ENCODE measurements at regions of chr6 and their contacts with region 1.

Region 1: DNA sequence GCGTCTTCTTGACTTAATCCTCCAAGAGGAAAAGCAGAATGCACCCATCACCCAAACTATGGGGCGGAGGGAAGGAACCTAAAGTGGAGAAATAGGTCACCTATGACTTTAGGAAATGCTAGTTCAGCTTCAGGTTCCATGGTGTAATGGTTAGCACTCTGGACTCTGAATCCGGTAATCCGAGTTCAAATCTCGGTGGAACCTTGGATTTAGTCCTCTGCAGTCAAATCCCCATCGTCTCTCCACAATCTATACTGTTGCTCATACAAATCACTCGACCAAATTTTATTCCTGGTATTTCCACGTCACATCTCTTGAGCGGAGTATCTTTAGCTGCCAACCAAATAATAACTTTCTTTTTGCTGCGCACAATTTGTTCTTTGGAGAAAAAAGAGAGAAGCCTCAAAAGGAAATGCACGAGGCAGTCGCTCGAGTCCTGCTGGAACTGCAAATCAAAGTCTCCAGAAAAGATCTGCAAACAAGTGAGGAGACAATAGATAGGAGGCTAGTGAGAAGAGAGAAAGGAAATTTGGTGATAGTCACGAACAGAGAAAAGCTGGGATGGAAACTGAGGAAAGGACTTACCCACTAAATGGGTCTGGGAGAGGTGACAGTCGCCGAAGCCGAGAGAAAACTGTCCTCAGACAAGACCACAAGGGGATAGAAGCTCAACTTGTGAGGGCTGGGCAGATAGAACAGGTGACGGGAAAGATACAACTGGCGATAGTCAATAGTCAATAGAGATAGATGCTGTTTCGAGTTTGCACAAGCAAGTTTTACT is 16.6 kb downstream of the POM121L2 start:
- DNase-seq: no peak
- H3K4me3 Mint-ChIP-seq: no peak overlapping the region
- H3K27ac Mint-ChIP-seq: no peak overlapping the region
- H3K4me1 Mint-ChIP-seq: peaks cover 6% of the 10 kb centered on the region
- H3K27me3 Mint-ChIP-seq: peaks cover 67% of the 10 kb centered on the region

Region 2: DNA sequence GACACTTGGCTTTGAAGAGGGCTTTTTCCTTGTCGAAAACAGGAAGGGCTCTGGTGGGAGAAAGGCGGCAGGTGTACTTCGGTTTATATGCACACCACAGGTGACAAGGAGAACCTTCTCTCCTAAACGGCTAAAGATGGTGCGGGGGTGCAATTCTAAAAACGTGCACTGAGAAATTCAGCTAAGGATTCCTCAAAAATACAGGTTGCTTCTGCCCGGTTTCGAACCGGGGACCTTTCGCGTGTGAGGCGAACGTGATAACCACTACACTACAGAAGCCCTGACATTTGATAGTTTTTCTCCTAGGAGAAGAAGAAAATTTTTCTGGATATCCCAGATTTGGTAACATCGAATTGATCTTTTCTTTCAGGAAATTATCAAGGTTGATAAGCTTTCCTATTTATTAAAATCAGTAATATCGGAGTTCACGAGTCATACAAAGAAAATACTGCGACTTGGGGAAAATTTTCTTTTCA is 15.4 kb before region 1 on chr6:
- intact Hi-C with region 1: loop called (anchors 2 kb)
- DNase-seq: no peak
- H3K4me3 Mint-ChIP-seq: peak overlapping the region; percentile 68
- H3K27ac Mint-ChIP-seq: no peak overlapping the region
- H3K4me1 Mint-ChIP-seq: peaks cover 18% of the 10 kb centered on the region
- H3K27me3 Mint-ChIP-seq: peaks cover 71% of the 10 kb centered on the region

Region 3: DNA sequence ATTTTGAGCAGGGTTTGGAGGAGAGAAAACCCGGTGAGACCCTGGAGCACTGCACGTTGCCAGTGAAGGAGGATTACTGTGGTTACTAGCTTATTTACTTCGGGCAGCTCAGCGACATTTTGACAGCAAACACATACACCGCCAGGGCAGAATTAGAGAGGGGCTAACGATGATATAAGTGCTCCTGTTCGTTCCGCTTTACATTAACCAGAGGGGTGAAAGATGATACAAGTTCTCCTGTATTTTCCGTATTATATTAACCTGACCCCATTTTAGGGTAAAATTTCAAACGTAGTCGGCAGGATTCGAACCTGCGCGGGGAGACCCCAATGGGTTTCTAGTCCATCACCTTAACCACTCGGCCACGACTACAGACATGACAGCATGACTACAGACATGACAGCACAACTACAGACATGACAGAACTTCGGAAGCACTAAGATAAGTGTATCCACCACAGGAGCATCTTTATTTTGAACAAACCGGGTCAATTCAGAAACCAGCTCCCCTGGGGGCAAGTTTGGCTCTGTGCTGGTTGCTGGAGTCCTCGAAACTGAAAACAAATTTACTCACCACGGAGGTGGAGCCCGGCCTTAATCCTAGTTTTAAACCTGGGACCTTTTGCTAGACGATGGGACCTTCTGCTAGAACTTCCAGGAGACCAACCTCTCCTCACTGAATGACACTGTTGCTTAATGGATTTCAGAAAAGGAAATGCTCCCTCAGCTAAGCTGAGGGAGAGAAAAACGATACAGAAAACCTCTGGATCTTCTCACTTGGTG is 257.8 kb after region 1 on chr6:
- intact Hi-C with region 1: loop called (anchors 5 kb)
- DNase-seq: peak; percentile 24
- H3K4me3 Mint-ChIP-seq: peak overlapping the region; percentile 60
- H3K27ac Mint-ChIP-seq: peak overlapping the region; percentile 38
- H3K4me1 Mint-ChIP-seq: peaks cover 16% of the 10 kb centered on the region
- H3K27me3 Mint-ChIP-seq: peaks cover 68% of the 10 kb centered on the region

Region 4: DNA sequence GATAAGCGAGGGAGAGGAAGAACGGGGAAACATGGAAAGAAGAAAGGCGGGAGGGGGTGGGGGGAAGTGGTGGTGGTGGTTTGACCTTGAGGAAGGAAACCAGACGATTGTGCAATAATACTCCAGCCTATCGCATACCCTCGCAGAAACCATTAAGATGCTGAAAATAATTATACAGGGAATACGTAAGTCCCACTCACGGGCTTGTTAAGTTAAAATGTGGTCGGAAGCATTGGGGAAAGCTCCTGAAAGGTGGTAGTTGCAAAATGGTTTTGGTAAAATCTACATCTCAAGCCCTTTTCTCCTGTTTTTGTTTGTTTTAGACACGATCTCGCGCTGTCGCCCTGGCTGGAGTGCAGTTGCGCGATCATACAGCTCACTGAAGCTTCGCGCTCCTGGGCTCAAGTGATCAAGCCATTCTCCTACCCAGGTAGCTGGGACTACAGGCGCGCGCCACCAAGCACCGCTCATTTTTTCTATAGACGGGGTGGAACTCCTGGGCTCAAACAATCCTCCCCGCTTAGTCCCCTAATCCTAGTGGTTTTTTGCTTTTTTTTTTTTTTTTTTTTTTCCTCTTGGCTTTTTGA is 306.3 kb after region 1 on chr6:
- intact Hi-C with region 1: loop called (anchors 5 kb)
- DNase-seq: no peak
- H3K4me3 Mint-ChIP-seq: peak overlapping the region; percentile 60
- H3K27ac Mint-ChIP-seq: no peak overlapping the region
- H3K4me1 Mint-ChIP-seq: peaks cover 26% of the 10 kb centered on the region
- H3K27me3 Mint-ChIP-seq: peaks cover 36% of the 10 kb centered on the region

Region 5: DNA sequence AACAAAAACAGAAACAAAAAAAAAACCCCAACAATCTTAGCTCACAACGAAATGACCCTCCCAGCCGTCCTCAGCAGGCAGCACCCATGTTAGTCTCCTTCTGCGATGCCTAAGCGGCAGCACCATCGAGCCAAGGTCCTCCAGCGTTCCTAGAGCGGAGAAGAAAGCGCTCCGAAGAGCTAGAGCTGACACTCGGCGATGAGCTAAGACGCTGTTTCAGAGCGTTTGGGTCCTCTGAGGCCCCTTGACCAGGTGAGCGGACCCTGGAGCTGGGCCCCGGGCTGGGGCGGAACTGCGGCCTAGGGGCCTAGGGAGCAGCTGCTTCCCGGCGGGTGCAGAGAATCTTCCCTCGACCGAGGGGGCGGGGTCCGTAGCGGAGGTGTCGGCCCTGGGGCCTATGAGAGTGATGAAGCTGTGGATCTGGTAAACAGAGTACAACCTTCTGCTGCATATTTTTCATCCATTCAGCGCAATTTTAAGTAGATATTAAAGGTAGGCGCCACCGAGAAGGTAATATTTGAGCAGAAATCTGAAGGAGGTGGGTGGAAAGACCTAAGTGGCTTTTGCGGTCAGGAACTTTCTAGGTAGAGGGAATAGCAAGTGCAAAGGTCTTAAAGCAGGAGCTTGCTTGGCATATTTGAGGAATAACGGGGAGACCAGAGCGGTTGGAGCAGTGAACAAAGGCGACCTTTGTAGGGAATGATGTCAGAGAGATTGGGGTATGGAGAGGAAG is 971.6 kb after region 1 on chr6 and contains the start of gene ZSCAN26:
- intact Hi-C with region 1: no loop called
- DNase-seq: peak; percentile 79
- H3K4me3 Mint-ChIP-seq: no peak within 1 kb of the TSS
- H3K27ac Mint-ChIP-seq: no peak within 1 kb of the TSS
- H3K4me1 Mint-ChIP-seq: peaks cover 28% of the 10 kb centered on the region
- H3K27me3 Mint-ChIP-seq: peaks cover 10% of the 10 kb centered on the region
- total RNA-seq, gene ZSCAN26: 6.1 and 7.7 TPM in 2 replicates

Region 6: GRCh38 chr6:28769626-28770402 is 1474.3 kb after region 1 on chr6:
- intact Hi-C with region 1: loop called (anchors 10 kb)
- DNase-seq: no peak
- H3K4me3 Mint-ChIP-seq: no peak overlapping the region
- H3K27ac Mint-ChIP-seq: no peak overlapping the region
- H3K4me1 Mint-ChIP-seq: peaks cover 5% of the 10 kb centered on the region
- H3K27me3 Mint-ChIP-seq: peaks cover 92% of the 10 kb centered on the region